ENCODE measurements at regions of chr15 and their contacts with region 1.

Region 1: DNA sequence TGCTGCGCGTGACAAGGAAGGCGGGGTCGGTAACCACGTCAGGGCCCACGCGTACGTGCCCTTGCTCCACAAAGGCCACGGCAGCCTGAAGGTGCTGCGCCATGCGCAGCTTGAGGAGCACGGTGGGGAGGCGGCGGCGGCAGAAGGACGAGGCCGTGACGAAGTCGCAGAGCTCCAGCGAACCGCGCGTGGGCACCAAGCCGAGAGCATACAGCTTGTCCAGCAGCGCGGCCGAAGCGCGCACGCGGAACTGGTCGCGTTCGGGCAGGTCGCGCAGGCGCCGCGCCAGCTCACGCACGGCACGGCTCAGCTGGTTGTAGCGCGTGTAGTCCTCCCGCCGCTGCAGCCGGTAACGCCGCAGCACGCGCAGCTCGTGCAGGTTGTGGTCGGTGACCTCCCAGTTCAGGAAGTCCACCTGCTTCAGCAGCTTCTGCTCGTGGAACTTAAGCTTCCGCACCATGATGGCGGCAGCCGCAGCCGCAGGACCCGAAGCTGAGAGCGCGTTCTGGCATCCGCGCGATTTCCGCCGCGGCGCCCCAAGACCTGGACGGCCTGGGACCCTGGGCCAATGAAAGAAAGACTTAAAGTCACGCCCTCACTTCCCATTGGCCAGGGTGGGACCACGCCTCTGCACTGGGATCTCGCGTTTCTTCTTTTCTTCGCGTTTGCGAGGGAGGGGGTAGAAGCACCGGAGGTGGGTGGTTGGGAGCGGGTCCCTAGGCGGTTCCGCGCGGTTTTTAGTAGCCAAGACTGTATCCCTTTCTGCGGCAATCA is at the start of gene IMP3:
- DNase-seq: peak; percentile 83
- ATAC-seq: peak; percentile 94
- H3K4me3 Mint-ChIP-seq: peak within 1 kb of the TSS; percentile 91
- H3K27ac Mint-ChIP-seq: peak within 1 kb of the TSS; percentile 92
- H3K4me1 Mint-ChIP-seq: peaks cover 38% of the 10 kb centered on the region
- H3K27me3 Mint-ChIP-seq: no peaks in the 10 kb centered on the region
- CTCF ChIP-seq: no peak
- total RNA-seq, gene IMP3: 65.6 and 72.6 TPM in 2 replicates

Region 2: GRCh38 chr15:74540761-74541493 is 1099.0 kb before region 1 on chr15 and contains the start of gene ARID3B:
- CTCF ChIA-PET with region 1: no interaction called
- POLR2A ChIA-PET with region 1: no interaction called
- intact Hi-C with region 1: loop called (anchors 10 kb)
- DNase-seq: peak; percentile 79
- ATAC-seq: peak; percentile 86
- H3K4me3 Mint-ChIP-seq: peak within 1 kb of the TSS; percentile 98
- H3K27ac Mint-ChIP-seq: peak within 1 kb of the TSS; percentile 95
- H3K4me1 Mint-ChIP-seq: peaks cover 49% of the 10 kb centered on the region
- H3K27me3 Mint-ChIP-seq: no peaks in the 10 kb centered on the region
- CTCF ChIP-seq: no peak
- total RNA-seq, gene ARID3B: 24.8 and 26.9 TPM in 2 replicates

Region 3: GRCh38 chr15:75508840-75509532 is 130.9 kb before region 1 on chr15:
- CTCF ChIA-PET with region 1: interaction called, 4 read pairs
- POLR2A ChIA-PET with region 1: interaction called, 8 read pairs
- intact Hi-C with region 1: loop called (anchors 1 kb)
- DNase-seq: no peak
- ATAC-seq: no peak
- H3K4me3 Mint-ChIP-seq: no peak overlapping the region
- H3K27ac Mint-ChIP-seq: no peak overlapping the region
- H3K4me1 Mint-ChIP-seq: no peaks in the 10 kb centered on the region
- H3K27me3 Mint-ChIP-seq: no peaks in the 10 kb centered on the region
- CTCF ChIP-seq: no peak

Region 4: GRCh38 chr15:75625542-75626347 is 14.2 kb before region 1 on chr15 and contains the start of gene SNUPN:
- CTCF ChIA-PET with region 1: interaction called, 8 read pairs
- POLR2A ChIA-PET with region 1: interaction called, 164 read pairs
- intact Hi-C with region 1: loop called (anchors 1 kb)
- DNase-seq: peak; percentile 78
- ATAC-seq: peak; percentile 93
- H3K4me3 Mint-ChIP-seq: peak within 1 kb of the TSS; percentile 96
- H3K27ac Mint-ChIP-seq: peak within 1 kb of the TSS; percentile 98
- H3K4me1 Mint-ChIP-seq: peaks cover 19% of the 10 kb centered on the region
- H3K27me3 Mint-ChIP-seq: no peaks in the 10 kb centered on the region
- CTCF ChIP-seq: no peak
- total RNA-seq, gene SNUPN: 20.5 and 20.8 TPM in 2 replicates

Region 5: DNA sequence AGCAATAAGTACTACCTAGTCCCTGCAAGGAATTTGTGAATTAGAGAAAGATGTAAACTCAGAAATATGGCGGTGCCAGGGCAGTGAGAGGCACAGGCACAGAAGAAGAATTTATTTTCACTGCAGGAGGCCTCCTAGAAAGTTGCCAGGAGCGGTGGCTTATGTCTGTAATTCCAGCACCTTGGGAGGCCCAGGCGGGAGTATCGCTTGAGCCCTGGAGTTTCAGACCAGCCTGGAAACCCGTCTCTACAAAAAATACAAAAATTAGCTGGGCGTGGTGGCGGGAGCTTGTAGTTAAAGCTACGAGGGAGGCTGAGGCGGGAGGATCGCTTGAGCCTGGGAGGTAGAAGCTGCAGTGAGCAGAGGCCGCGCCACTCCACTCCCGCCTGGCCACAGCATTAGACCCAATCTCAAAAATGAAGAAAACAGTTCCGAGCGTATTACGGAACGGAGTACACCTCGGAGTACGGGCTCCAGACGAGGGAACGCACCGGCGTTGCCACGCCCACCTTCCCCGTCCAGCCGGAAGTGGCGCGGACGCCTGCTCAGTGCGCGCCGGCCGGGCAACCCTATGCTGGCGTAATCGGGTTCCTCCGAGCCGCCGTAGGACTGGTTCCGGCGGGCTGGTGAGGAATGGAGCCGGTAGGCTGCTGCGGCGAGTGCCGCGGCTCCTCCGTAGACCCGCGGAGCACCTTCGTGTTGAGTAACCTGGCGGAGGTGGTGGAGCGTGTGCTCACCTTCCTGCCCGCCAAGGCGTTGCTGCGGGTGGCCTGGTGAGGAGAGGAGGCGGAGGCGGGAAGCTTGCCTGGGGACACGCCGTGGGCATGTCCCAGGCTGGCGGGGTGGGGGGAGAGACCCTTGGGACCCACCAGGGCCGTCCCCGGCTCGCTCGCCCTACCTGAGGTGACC is 263.7 kb after region 1 on chr15 and contains the start of gene FBXO22:
- CTCF ChIA-PET with region 1: no interaction called
- POLR2A ChIA-PET with region 1: no interaction called
- intact Hi-C with region 1: loop called (anchors 1 kb)
- DNase-seq: peak; percentile 84
- ATAC-seq: peak; percentile 95
- H3K4me3 Mint-ChIP-seq: peak within 1 kb of the TSS; percentile 99
- H3K27ac Mint-ChIP-seq: peak within 1 kb of the TSS; percentile 96
- H3K4me1 Mint-ChIP-seq: peaks cover 26% of the 10 kb centered on the region
- H3K27me3 Mint-ChIP-seq: no peaks in the 10 kb centered on the region
- CTCF ChIP-seq: no peak
- total RNA-seq, gene FBXO22: 19.6 and 24.4 TPM in 2 replicates